ENCODE measurements at regions of chr11 and their contacts with region 1.

Region 1: GRCh38 chr11:36478700-36479329 is 31.3 kb downstream of the TRAF6 start:
- DNase-seq: no peak
- H3K4me3 ChIP-seq: no peak overlapping the region
- H3K27ac ChIP-seq: no peak overlapping the region
- H3K4me1 ChIP-seq: no peaks in the 10 kb centered on the region
- H3K27me3 ChIP-seq: no peaks in the 10 kb centered on the region
- CTCF ChIP-seq: peak in 2 of 3 experiments; percentile 62 to 71; a peak in 3 of 4 replicates
- EP300 ChIP-seq: no peak
- POLR2A ChIP-seq: no peak
- RAD21 ChIP-seq: peak; percentile 90 to 92

Region 2: DNA sequence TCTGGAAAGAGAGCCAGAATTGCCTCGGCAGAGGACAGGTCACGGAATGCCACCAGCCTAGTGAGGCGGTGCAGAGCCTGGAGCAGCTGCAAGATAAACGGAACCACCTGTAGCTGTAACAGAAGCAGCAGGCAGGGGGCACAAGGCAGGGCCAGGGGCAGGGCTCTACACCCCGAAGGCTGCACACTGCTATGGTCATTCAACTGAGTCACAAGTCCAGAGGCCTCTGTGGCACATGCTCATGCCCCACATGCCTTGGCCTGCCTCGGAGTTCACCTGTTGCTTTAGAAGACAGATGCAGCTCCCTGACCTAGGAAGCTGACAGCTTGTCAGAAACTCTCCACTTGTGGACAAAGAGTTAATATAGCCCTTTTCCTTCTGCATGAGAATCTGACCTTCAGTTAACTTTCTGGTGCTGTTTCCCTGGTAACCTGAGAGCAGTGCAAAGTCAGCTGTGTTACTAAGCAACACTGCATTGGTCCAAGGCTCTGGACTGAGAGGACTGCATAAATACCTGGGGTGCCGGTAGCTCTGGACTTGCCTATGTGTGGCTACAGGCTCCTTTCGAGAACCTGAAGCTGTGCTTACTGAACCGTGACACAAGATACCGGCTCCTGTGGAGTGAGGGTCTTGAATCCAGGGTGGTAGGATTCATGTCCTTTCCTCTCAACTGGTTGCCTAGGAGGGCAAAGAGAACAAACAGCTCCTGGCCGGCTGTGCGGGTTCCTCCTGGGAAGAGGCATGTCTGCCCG is 200.1 kb before region 1 on chr11:
- CTCF ChIA-PET with region 1: interaction called, 34 read pairs
- POLR2A ChIA-PET with region 1: interaction called, 4 read pairs
- DNase-seq: no peak
- H3K4me3 ChIP-seq: no peak overlapping the region
- H3K27ac ChIP-seq: no peak overlapping the region
- H3K4me1 ChIP-seq: no peaks in the 10 kb centered on the region
- H3K27me3 ChIP-seq: no peaks in the 10 kb centered on the region
- CTCF ChIP-seq: peak; percentile 33 to 38 (median 36)
- EP300 ChIP-seq: no peak
- POLR2A ChIP-seq: no peak
- RAD21 ChIP-seq: peak in 1 of 2 experiments; percentile 40; a peak in 2 of 4 replicates

Region 3: GRCh38 chr11:36300651-36301050 is 178.2 kb before region 1 on chr11:
- CTCF ChIA-PET with region 1: interaction called, 152 read pairs
- POLR2A ChIA-PET with region 1: no interaction called
- DNase-seq: no peak
- H3K4me3 ChIP-seq: no peak overlapping the region
- H3K27ac ChIP-seq: no peak overlapping the region
- H3K4me1 ChIP-seq: no peaks in the 10 kb centered on the region
- H3K27me3 ChIP-seq: no peaks in the 10 kb centered on the region
- CTCF ChIP-seq: no peak
- EP300 ChIP-seq: no peak
- POLR2A ChIP-seq: no peak
- RAD21 ChIP-seq: no peak

Region 4: DNA sequence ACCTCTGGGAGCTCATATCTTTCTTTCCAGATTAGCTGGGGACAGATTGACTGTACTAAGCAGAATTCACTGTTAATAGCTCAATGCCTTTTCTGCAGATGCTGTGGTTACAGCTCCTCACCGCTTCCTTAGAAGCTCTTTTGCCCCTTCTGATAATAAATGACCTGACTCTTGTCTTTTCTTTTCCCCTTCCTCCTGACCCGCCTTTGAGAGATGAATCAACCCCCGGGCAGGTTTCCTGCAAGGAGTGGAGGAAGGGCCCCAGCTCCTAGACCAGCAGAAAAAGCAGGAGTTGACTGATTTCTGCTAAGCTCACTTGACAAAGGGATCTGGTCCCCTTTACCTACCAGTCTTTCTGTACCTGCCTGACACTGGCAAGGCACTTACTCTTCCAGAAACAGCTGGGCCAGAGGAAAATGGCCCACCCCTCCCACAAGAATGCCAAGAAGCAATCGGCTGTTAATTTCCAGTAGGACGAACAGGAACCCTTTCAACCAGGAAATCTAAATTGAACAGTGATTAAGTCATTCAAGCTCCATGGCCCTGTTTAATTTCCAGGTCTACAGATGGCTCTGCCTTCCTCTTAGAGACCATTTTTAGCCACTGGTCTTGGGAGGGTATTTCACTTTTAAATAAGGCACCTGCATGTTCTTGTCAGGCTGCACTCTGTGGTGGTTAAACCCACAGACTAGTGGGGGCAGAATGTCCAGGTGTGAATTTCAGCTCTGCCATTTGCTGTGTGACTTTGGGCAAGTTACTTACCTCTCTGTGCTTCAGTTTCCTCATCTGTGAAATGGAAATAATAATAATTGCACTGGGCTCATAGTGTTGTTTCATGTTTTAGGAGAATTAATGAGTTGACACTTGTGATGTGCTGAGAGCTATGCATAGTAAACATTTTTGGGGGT is 115.2 kb before region 1 on chr11:
- CTCF ChIA-PET with region 1: interaction called, 11 read pairs
- POLR2A ChIA-PET with region 1: interaction called, 3 read pairs
- DNase-seq: peak in 1 of 2 experiments; percentile 47
- H3K4me3 ChIP-seq: no peak overlapping the region
- H3K27ac ChIP-seq: no peak overlapping the region
- H3K4me1 ChIP-seq: peaks cover 0 to 11% (median 6%) of the 10 kb centered on the region in 4 experiments; a peak in 3 of 7 replicates
- H3K27me3 ChIP-seq: peaks cover 0 to 4% (median 0%) of the 10 kb centered on the region in 4 experiments; a peak in 4 of 7 replicates
- CTCF ChIP-seq: no peak
- EP300 ChIP-seq: no peak
- POLR2A ChIP-seq: no peak
- RAD21 ChIP-seq: no peak

Region 5: DNA sequence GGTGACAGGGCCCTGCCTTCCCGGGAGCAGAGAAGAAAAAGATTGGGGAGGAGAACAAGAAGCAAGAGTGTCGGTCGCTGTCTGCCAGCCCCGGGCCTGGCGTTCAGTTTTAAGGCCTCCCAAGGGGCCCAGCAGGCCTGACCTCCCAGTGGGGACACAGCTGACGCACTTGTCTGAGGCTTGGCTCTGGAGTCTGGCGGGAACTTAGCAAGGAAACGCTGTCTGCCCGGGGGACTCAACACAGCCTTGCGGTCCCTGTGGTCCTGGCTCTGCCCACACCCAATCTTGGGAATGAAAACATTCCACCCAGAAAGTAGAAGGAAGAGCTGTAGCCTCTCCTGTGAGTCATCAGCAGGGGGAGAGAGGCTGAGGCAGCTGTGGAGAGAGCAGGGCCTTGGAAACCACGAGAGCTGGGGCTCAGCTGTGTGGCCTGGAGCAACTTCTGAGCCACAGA is 23.1 kb before region 1 on chr11:
- CTCF ChIA-PET with region 1: interaction called, 14 read pairs
- POLR2A ChIA-PET with region 1: no interaction called
- DNase-seq: no peak
- H3K4me3 ChIP-seq: no peak overlapping the region
- H3K27ac ChIP-seq: no peak overlapping the region
- H3K4me1 ChIP-seq: peaks cover 0 to 30% (median 13%) of the 10 kb centered on the region in 4 experiments; a peak in 6 of 7 replicates
- H3K27me3 ChIP-seq: no peaks in the 10 kb centered on the region
- CTCF ChIP-seq: no peak
- EP300 ChIP-seq: no peak
- POLR2A ChIP-seq: no peak
- RAD21 ChIP-seq: no peak

Region 6: GRCh38 chr11:36509694-36510566 is 31.1 kb after region 1 on chr11 and contains the start of gene TRAF6:
- CTCF ChIA-PET with region 1: interaction called, 11 read pairs
- POLR2A ChIA-PET with region 1: no interaction called
- DNase-seq: peak; percentile 43 to 98
- H3K4me3 ChIP-seq: peak within 1 kb of the TSS; percentile 95 to 96 (median 96)
- H3K27ac ChIP-seq: peak within 1 kb of the TSS; percentile 87; the same call in 1 of the 2 replicates
- H3K4me1 ChIP-seq: no peaks in the 10 kb centered on the region; a peak in 2 of 7 replicates
- H3K27me3 ChIP-seq: no peaks in the 10 kb centered on the region; a peak in 2 of 7 replicates
- CTCF ChIP-seq: peak; percentile 75 to 87 (median 85)
- EP300 ChIP-seq: no peak
- POLR2A ChIP-seq: peak; percentile 93 to 95
- RAD21 ChIP-seq: peak; percentile 29 to 32; a peak in 3 of 4 replicates
- total RNA-seq, gene TRAF6: 8.8 and 9.4 TPM in 2 replicates

Measured in H1 (cell line).